ENCODE measurements at regions of chr17 and their contacts with region 1.

Region 1: DNA sequence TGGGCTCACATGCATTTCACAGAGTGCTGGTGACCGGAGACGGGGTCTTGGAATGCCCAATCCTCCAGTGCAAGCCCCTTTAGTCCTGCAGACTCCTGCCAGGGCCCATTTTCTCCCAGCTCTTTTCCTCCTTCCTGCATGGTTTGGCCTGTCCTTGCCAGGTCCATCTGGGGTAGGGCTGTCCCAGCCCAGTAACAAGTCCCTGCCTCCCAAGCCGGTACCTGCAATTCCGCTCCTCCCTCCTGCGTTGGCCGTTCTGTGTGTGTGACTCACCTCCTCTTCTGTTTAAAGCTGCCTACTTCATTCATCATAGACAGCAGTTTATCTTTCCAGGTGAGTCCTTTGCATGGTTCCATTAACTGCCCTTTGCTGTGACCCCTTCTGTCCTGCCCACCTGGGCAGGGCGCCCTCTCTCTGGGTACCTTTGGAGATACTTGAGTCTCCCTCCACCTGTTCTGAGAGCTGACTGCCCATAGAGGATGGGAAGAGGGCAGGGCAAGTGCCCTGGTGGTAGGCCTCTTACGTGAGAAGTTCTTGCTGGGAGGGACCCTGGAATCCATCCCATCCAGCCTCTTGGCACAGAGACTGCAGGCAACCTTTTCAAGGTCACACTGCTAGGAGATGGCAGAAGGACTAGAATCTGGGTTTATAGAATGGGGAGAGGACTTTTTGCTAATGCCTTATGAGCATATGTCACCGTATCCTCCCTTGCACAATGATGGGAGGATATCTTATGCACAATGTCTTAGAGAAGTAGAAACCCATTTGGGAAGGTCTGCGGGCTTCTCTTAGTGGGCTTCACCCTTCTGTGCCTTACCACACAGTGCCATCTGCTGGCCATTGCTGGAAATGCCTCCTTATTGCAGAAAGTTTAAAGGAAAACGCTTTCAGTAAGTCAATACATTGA is 29.7 kb upstream of the LGALS9 start:
- DNase-seq: peak; percentile 84
- H3K4me3 Mint-ChIP-seq: no peak overlapping the region
- H3K27ac Mint-ChIP-seq: no peak overlapping the region
- H3K4me1 Mint-ChIP-seq: peaks cover 15% of the 10 kb centered on the region
- H3K27me3 Mint-ChIP-seq: no peaks in the 10 kb centered on the region

Region 2: DNA sequence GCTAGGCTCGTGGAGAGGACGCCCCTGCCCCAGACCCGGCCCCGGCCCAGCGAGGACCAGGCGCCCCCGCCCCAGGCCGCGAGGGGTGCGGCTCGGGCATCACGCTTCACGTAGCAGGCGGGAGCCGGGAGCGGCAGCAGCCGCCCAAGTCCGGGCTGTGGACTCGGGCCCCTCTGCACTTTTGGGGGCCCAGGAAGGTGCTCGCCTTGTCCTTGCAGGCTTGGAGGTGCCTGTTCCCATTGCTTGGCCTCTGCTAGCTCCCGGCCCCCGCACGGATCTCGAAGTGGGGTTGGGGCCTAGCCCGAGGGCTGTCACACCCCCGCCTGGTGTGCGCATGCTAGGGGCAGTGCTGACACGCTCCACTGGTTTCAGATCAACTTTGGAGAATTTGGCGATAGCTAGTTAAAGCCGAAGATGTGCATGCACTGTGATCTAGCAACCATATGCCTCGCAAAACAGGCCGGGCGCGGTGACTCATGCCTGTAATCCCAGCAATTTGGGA is 251.7 kb before region 1 on chr17:
- CTCF ChIA-PET with region 1: interaction called, 13 read pairs
- POLR2A ChIA-PET with region 1: no interaction called
- DNase-seq: no peak
- H3K4me3 Mint-ChIP-seq: no peak overlapping the region
- H3K27ac Mint-ChIP-seq: no peak overlapping the region
- H3K4me1 Mint-ChIP-seq: peaks cover 25% of the 10 kb centered on the region
- H3K27me3 Mint-ChIP-seq: no peaks in the 10 kb centered on the region

Region 3: DNA sequence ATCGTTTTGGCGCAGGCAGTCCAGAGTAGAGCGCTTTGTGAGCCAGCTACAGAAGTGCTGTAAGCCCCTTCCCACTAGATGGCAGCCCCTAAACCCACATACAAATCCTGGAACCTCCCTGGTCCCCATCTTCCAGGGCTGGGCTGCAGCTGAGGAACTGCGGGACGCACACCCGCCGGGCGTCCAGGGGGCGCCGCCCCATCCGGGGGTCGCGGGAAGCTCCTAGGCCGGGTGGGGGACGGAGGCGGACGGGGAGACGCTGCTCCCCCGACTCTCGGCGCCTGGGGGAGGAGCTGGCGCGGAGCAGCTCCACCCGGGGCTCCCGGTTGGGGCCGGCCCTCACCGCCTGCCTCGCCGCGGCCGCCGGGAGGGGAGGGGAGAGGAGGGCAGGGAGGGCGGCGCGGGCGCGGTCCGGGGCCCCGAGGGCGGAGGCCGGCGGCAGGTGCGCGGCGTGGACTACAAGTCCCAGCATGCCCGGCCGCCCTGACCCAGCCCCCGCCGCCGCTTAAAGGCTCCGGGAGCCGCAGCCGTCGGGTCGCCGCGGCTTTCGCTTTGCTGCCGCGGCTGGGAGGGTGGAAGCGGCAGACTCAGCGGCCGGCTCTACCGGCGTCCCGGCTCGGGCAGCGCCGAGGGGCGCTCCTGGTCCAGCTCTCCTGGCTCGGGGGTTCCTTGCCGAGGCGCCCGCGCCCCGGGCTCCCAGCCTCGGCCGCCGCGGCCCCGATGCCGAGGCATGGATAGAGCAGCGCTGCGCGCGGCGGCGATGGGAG is 145.2 kb before region 1 on chr17 and contains the start of gene KSR1:
- CTCF ChIA-PET with region 1: interaction called, 14 read pairs
- POLR2A ChIA-PET with region 1: no interaction called
- DNase-seq: peak; percentile 85
- H3K4me3 Mint-ChIP-seq: peak within 1 kb of the TSS; percentile 87
- H3K27ac Mint-ChIP-seq: peak within 1 kb of the TSS; percentile 90
- H3K4me1 Mint-ChIP-seq: peaks cover 49% of the 10 kb centered on the region
- H3K27me3 Mint-ChIP-seq: peaks cover 2% of the 10 kb centered on the region
- total RNA-seq, gene KSR1: 43.1 to 45.7 TPM

Region 4: DNA sequence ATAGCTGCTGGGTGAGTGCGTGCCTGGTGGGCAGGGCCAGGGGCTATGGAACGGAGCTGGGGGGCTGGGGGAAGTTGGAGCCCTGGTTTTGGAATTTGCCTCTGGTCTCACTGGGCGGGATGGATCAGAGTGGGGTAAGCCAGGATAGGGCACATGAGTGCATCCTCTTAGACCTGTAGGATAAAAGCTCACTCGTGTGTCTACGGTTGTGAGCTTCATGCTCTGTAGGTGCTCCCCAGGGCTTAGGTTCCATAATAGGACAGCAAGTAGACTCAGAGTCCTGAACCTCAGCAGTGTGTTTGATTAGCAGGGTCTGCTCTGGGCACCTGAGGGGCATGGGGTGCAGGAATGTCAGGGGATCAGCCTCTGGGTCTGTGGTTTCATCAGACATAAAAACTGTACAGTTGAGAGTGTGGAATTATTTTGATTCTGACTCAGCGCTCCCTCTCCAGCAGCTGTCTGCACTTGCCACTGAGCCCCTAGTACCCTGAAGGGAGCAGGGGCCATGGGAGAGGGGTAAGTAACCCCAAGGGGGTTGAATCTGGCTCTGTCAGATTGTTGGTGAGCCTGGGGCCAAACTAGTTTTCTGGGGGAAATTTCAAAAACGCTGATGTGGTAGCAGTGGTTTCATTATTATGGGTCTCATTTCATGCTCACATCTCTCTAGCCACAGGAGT is 54.6 kb before region 1 on chr17:
- CTCF ChIA-PET with region 1: no interaction called
- POLR2A ChIA-PET with region 1: no interaction called
- DNase-seq: no peak
- H3K4me3 Mint-ChIP-seq: peak overlapping the region; percentile 27
- H3K27ac Mint-ChIP-seq: peak overlapping the region; percentile 68
- H3K4me1 Mint-ChIP-seq: peaks cover 66% of the 10 kb centered on the region
- H3K27me3 Mint-ChIP-seq: no peaks in the 10 kb centered on the region

Region 5: DNA sequence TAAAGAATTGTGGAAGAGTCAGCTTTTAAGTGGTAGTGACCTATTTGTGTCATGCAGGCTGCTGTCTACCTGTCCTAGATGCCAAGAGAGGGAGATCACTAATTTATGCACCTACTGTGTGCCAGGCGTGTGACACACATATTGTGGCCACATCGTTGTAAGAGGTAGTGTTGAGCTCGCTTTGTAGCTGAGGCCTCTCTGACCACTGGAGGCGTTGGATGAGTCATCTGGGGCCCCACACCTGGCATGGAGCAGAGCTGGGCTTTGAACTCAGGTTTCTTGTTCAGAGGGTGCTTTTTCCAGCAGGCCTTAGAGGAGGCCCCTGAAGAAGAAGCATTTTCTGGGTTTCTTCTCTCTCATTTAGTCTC is 22.6 kb before region 1 on chr17:
- CTCF ChIA-PET with region 1: interaction called, 13 read pairs
- POLR2A ChIA-PET with region 1: no interaction called
- DNase-seq: peak; percentile 46
- H3K4me3 Mint-ChIP-seq: no peak overlapping the region
- H3K27ac Mint-ChIP-seq: peak overlapping the region; percentile 67
- H3K4me1 Mint-ChIP-seq: peaks cover 70% of the 10 kb centered on the region
- H3K27me3 Mint-ChIP-seq: no peaks in the 10 kb centered on the region

Region 6: GRCh38 chr17:27692766-27693165 is 91.4 kb after region 1 on chr17:
- CTCF ChIA-PET with region 1: no interaction called
- POLR2A ChIA-PET with region 1: no interaction called
- DNase-seq: no peak
- H3K4me3 Mint-ChIP-seq: no peak overlapping the region
- H3K27ac Mint-ChIP-seq: no peak overlapping the region
- H3K4me1 Mint-ChIP-seq: no peaks in the 10 kb centered on the region
- H3K27me3 Mint-ChIP-seq: no peaks in the 10 kb centered on the region

Measured in activated CD4-positive, alpha-beta T cell treated with anti-CD3 and anti-CD28 coated beads, Interleukin-2, amount 10 ng/mL, durations not matched to agents 7 days and 5 days (primary cell).